Dorsolateral prefrontal cortex (tissue), 120 donors: ENCODE measurements at regions of chr14 and their contacts with region 1.

Region 1: DNA sequence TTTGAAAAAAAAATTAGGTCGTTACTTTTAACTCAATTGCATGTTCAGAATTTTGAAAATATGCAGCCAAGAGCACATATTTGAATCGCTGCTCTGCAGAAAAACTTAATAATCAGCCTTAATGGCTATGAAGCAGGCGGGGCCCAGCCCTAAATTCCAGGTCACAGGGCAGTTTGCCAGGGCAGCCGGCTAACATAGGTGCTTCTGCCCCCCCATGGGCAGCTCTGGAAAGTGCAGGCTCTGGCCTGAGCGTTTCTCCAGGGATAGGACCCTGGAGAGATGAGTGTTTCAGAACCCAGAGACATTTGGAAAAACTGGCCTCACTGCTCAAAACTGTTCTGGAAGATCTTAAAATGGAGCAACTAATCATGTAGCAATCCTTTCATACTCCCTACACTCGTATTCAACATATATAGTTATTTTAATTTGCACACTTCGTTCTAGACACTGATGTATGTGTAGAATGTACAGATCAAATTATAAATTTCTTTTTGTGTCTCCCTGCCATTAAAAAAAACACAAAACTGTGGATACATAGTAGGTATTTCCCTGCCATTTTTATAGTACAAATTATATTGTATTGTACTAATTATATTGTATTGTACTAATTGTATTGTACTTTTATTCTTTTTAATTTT is 26.0 kb upstream of the PTGR2 start:
- DNase-seq: peak; percentile 65 to 87 (median 80)
- H3K4me3 ChIP-seq: peak overlapping the region in 2 of 59 donors; percentile 3 to 5
- H3K27ac ChIP-seq: peak overlapping the region in 6 of 59 donors; percentile 6 to 39 (median 27)
- H3K27me3 ChIP-seq: no peaks in the 10 kb centered on the region
- CTCF ChIP-seq: peak; percentile 78 to 99 (median 93)

Region 2: DNA sequence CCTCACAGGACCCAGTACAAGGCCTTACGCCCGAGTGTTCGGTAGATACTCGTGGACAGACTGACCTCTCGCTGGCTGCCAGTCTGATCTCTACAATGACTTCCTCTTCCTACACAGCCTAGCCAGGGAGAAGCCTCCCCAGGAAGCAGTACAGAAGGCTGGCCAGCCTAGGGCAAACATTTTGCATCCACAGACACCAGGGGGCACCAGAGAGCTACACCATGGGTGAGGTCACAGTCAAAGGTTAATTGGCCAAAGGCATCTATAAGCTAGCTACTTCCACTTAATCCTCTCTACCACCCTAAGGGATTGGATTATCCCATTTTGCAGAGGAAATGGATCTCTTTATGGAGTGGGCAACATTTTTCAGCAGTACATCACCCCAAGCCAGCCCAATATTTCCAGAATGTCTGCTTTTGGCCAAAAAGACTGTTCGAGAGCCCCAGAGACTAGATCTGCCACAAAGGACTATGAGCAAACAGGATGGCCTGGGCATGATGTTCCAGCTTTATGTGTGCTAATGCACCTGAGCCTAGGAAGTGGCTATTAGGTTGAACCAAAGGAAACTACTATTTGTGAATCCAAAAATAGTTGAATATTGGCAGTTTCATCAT is 96.8 kb before region 1 on chr14:
- intact Hi-C with region 1: loop called (anchors 1 to 2 kb)
- DNase-seq: peak in 8 of 10 donors; percentile 76 to 88 (median 82)
- H3K4me3 ChIP-seq: peak overlapping the region in 1 of 59 donors; percentile 4
- H3K27ac ChIP-seq: peak overlapping the region in 49 of 59 donors; percentile 0 to 74 (median 45)
- H3K27me3 ChIP-seq: no peaks in the 10 kb centered on the region
- CTCF ChIP-seq: peak; percentile 88 to 99 (median 96)

Region 3: GRCh38 chr14:73753959-73754882 is 71.4 kb before region 1 on chr14:
- intact Hi-C with region 1: loop called in 1 of 2 experiments (anchors 5 kb)
- DNase-seq: peak in 7 of 10 donors; percentile 48 to 75 (median 66)
- H3K4me3 ChIP-seq: peak overlapping the region in 54 of 59 donors; percentile 1 to 53 (median 30)
- H3K27ac ChIP-seq: peak overlapping the region; percentile 49 to 99 (median 91)
- H3K27me3 ChIP-seq: no peaks in the 10 kb centered on the region
- CTCF ChIP-seq: peak in 2 of 56 donors; percentile 18 to 25